PC-9 (cell line): ENCODE measurements at regions of chr1 and their contacts with region 1.

Region 1: GRCh38 chr1:224922404-224923164 is 6.9 kb upstream of the DNAH14 start:
- DNase-seq: peak; percentile 16 to 51
- H3K4me3 ChIP-seq: no peak overlapping the region
- H3K27ac ChIP-seq: no peak overlapping the region
- H3K4me1 ChIP-seq: no peaks in the 10 kb centered on the region
- H3K27me3 ChIP-seq: no peaks in the 10 kb centered on the region
- CTCF ChIP-seq: peak; percentile 83

Region 2: GRCh38 chr1:223707256-223708000 is 1215.2 kb before region 1 on chr1:
- CTCF ChIA-PET with region 1: no interaction called
- POLR2A ChIA-PET with region 1: no interaction called
- intact Hi-C with region 1: loop called (anchors 10 kb)
- DNase-seq: peak; percentile 86 to 96
- H3K4me3 ChIP-seq: peak overlapping the region; percentile 45; the same call in 1 of the 2 replicates
- H3K27ac ChIP-seq: peak overlapping the region; percentile 96
- H3K4me1 ChIP-seq: peaks cover 94% of the 10 kb centered on the region
- H3K27me3 ChIP-seq: no peaks in the 10 kb centered on the region
- CTCF ChIP-seq: no peak

Region 3: GRCh38 chr1:224113918-224114786 is 808.4 kb before region 1 on chr1 and contains the start of gene FBXO28:
- CTCF ChIA-PET with region 1: interaction called, 11 read pairs
- POLR2A ChIA-PET with region 1: no interaction called
- intact Hi-C with region 1: loop called (anchors 1 kb)
- DNase-seq: peak; percentile 86 to 93
- H3K4me3 ChIP-seq: peak within 1 kb of the TSS; percentile 81
- H3K27ac ChIP-seq: peak within 1 kb of the TSS; percentile 45
- H3K4me1 ChIP-seq: peaks cover 24% of the 10 kb centered on the region
- H3K27me3 ChIP-seq: no peaks in the 10 kb centered on the region
- CTCF ChIP-seq: no peak
- total RNA-seq, gene FBXO28: 43.4 and 48.1 TPM in 2 replicates

Region 4: GRCh38 chr1:224329842-224330753 is 592.5 kb before region 1 on chr1 and contains the start of gene NVL:
- CTCF ChIA-PET with region 1: interaction called, 3 read pairs
- POLR2A ChIA-PET with region 1: no interaction called
- intact Hi-C with region 1: loop called (anchors 1 kb)
- DNase-seq: peak; percentile 84 to 91
- H3K4me3 ChIP-seq: peak within 1 kb of the TSS; percentile 87
- H3K27ac ChIP-seq: peak within 1 kb of the TSS; percentile 78
- H3K4me1 ChIP-seq: peaks cover 16% of the 10 kb centered on the region
- H3K27me3 ChIP-seq: no peaks in the 10 kb centered on the region
- CTCF ChIP-seq: no peak
- total RNA-seq, gene NVL: 27.3 and 36.1 TPM in 2 replicates

Region 5: GRCh38 chr1:224513787-224514209 is 408.8 kb before region 1 on chr1:
- CTCF ChIA-PET with region 1: interaction called, 18 read pairs
- POLR2A ChIA-PET with region 1: no interaction called
- intact Hi-C with region 1: loop called (anchors 2 kb)
- DNase-seq: peak; percentile 71 to 92
- H3K4me3 ChIP-seq: no peak overlapping the region
- H3K27ac ChIP-seq: no peak overlapping the region
- H3K4me1 ChIP-seq: peaks cover 37% of the 10 kb centered on the region
- H3K27me3 ChIP-seq: no peaks in the 10 kb centered on the region
- CTCF ChIP-seq: peak; percentile 94

Region 6: DNA sequence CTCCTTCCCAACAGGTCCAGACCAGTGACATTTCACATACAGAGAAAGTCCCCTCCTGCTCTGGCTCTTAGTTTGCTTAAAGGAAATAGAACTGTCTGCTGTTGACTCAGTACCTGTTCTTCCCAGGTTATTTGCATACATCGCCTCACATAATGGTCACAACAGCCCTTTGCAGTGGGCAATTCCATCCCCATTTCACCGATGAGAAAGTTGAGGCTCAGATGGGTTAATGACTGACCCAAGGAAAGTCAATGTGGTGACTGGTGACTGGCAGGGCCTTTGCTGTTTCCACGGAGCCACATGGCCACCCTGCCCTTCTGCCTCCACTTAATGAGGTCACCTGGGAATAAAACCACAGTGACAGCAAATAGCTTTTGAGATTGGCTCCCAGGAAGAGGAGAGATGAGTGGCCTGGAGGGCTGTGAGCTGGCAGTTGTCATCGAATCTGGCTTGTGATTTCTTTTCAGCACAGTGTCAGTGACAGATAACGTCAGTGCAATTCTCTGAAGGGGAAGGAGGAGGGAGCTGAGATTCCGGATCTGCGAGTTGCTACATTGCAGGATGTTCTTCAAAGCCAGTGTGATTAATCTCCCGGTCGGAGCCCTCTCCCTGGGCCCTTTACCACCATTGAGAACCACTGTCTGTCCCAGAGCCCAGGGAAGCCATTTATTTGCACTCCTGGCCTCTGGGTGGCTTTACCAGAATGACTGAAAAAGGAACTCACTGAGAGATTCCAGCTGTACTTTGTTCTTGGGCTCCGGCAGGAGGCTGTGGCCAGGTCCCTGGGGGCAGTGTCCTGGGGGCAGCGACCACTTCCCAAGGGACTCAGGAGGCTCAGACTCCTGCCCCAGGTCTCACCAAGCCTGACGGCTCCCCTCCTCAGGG is 189.3 kb before region 1 on chr1:
- CTCF ChIA-PET with region 1: no interaction called
- POLR2A ChIA-PET with region 1: no interaction called
- intact Hi-C with region 1: loop called (anchors 5 kb)
- DNase-seq: peak; percentile 73 to 94
- H3K4me3 ChIP-seq: peak overlapping the region; percentile 40; the same call in 1 of the 2 replicates
- H3K27ac ChIP-seq: peak overlapping the region; percentile 97
- H3K4me1 ChIP-seq: peaks cover 53% of the 10 kb centered on the region
- H3K27me3 ChIP-seq: no peaks in the 10 kb centered on the region
- CTCF ChIP-seq: no peak